ENCODE measurements at regions of chr2 and their contacts with region 1.

Region 1: DNA sequence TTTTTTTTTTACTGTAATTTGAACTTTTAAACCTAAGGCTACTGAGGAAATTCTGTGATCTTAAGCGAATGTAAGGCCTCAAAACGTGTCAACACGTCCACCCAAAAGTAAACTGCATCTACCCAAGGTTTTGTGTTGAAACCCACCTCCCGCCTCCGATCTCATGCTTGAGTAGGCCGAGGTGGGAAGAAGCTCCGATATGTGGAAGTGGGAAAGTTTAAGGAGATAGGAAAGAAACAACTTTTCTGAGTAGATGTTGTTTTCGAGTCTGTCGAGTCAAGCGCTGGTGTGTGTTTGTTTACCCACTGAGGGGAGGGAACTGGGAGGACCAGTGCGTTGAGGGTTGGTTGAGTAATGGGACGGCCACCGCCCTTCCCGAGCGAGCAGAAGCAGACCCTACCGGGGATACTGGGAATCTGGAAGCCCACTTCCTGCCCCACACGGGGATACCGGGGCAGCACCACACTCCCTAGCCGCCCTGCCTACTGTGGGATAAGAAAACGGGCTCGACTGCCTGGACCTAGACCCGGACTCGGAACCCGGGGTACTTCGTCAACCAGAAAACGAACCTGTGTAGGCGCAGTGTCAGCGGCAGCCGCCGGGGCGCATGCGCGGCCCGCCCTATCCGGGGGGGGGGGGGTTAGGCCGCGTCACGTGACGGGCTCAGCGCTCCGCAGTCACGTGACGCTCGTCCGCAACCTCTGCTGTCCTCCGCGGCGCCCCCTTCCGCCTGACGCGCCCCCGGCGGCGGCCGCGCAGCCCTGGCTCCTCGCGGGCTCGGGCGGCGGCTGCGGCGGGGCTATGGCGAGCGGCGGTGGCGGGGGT is at the start of gene RETREG2:
- DNase-seq: peak; percentile 94
- H3K4me3 ChIP-seq: peak within 1 kb of the TSS; percentile 64 to 97 (median 86)
- H3K27ac ChIP-seq: peak within 1 kb of the TSS; percentile 91 to 99 (median 94)
- H3K4me1 ChIP-seq: peaks cover 2 to 39% (median 31%) of the 10 kb centered on the region in 4 donors
- H3K27me3 ChIP-seq: no peaks in the 10 kb centered on the region
- CTCF ChIP-seq: peak in 1 of 4 experiments; percentile 25
- EP300 ChIP-seq: peak in 1 of 4 donors; percentile 28
- POLR2A ChIP-seq: peak; percentile 98 to 99
- total RNA-seq, gene RETREG2: 37.3 to 48.2 (median 43.2) TPM

Region 2: DNA sequence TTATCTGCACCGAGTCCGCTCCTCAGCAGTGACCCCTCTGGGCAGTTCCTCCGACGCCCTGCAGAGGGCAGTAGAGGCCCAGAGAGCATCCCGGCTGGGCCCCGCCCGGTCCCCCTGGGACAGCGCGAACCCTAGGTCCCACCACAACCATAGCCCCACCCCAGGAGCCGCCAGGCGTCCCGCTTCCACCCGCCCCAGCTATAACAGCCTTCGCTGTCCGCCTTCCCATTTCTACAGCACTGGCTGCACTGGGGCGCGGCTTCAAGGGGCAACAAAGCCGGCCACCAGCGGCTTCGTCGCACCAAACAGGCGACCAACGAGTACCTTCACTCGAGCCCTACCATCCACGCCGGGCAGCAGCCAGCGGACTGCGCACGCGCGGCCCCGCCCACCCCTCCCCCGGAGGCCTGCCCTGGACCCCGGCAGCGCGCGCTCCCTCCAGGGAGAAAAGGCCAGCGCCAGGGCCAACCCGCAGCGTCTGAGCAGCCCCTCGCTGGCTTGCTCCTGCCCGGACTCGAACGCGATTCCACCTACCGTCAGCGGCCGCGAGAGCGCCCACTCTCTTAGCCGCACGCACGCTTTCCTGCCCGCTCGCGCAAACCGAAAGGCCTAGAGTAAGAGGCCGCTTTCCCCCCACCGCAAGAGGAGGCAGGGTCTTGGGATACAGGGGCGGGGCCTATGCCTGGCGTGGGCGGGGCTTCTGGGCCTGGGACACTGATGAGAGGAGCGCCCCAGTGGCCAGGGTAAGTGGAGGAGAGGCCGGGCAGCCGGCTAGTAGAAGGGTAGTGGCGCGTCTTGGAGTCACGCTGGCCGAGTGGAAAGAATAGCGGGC is 17.4 kb before region 1 on chr2 and contains the start of gene NHEJ1:
- intact Hi-C with region 1: loop called (anchors 2 kb)
- DNase-seq: peak; percentile 99
- H3K4me3 ChIP-seq: peak within 1 kb of the TSS; percentile 70 to 75 (median 72)
- H3K27ac ChIP-seq: peak within 1 kb of the TSS; percentile 93 to 99 (median 96)
- H3K4me1 ChIP-seq: peaks cover 0 to 13% (median 10%) of the 10 kb centered on the region in 4 donors
- H3K27me3 ChIP-seq: no peaks in the 10 kb centered on the region
- CTCF ChIP-seq: peak; percentile 93 to 100 (median 98)
- EP300 ChIP-seq: no peak
- POLR2A ChIP-seq: peak; percentile 42 to 53
- total RNA-seq, gene NHEJ1: 15.1 to 22.5 (median 18.4) TPM

Region 3: DNA sequence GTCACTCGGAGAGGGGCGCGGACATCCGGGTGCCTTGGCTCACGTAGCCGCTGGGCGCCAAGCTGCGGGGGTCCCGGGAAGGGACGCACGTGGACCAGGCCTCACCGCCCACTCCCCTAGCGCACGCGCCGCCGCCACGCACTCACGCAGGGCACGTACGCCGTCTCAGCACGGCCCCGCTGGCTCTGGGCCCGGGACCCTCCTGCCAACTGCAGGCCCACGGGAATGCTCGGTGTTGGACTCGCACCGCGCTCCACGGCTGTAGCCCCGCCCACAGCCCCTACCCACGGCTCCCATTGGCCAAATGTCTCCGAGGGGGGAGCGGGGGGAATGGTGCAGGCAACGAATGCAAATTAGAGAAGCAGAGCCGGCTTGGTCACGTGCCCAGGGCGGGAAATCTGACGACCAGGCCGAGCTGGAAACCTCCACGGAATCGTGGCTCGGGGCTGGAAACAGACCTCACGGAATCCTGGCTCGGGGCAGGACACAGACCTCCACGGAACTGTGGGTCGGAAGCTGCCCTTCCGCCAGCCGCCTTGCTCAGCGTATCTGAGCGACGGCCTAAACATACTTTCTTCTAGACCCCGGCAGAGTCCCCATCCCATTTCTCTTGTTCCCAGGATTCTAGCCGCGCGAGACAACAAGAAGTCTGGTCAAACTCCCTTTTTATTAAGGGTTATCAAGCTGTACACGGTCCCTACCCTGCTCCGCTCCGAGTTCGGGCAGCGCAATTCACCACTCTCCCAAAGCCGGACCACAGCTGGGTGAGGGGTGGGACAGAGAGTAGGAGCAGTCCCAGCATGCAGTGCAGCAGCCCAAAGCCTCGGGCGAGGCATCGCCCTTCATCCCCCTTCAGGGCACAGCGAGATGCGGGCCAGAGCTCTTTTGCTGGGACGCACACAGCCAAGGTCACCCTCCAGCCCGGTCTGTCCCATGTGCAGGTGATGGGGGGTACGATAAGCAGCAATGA is 41.3 kb after region 1 on chr2 and contains the start of gene ABCB6:
- intact Hi-C with region 1: loop called (anchors 2 kb)
- DNase-seq: peak; percentile 99
- H3K4me3 ChIP-seq: peak within 1 kb of the TSS; percentile 41 to 62 (median 54)
- H3K27ac ChIP-seq: peak within 1 kb of the TSS; percentile 84 to 98 (median 96)
- H3K4me1 ChIP-seq: peaks cover 0 to 37% (median 32%) of the 10 kb centered on the region in 4 donors
- H3K27me3 ChIP-seq: no peaks in the 10 kb centered on the region
- CTCF ChIP-seq: no peak
- EP300 ChIP-seq: no peak
- POLR2A ChIP-seq: peak in 1 of 2 donors; percentile 47
- total RNA-seq, gene ABCB6: 11.8 to 23.0 (median 16.1) TPM

Region 4: GRCh38 chr2:219253753-219254590 is 76.2 kb after region 1 on chr2 and contains the start of gene TUBA4A:
- intact Hi-C with region 1: loop called (anchors 2 kb)
- DNase-seq: peak; percentile 94
- H3K4me3 ChIP-seq: peak within 1 kb of the TSS; percentile 56 to 74 (median 60)
- H3K27ac ChIP-seq: peak within 1 kb of the TSS; percentile 79 to 87 (median 84)
- H3K4me1 ChIP-seq: peaks cover 0 to 52% (median 45%) of the 10 kb centered on the region in 4 donors
- H3K27me3 ChIP-seq: no peaks in the 10 kb centered on the region
- CTCF ChIP-seq: peak in 1 of 4 experiments; percentile 28
- EP300 ChIP-seq: no peak
- POLR2A ChIP-seq: peak; percentile 87 to 96
- total RNA-seq, gene TUBA4A: 47.1 to 109 (median 55.0) TPM

Region 5: GRCh38 chr2:219294356-219295351 is 116.9 kb after region 1 on chr2:
- intact Hi-C with region 1: loop called (anchors 5 kb)
- DNase-seq: peak; percentile 91
- H3K4me3 ChIP-seq: peak overlapping the region; percentile 43 to 65 (median 54)
- H3K27ac ChIP-seq: peak overlapping the region; percentile 84 to 91 (median 90)
- H3K4me1 ChIP-seq: peaks cover 0 to 19% (median 18%) of the 10 kb centered on the region in 4 donors
- H3K27me3 ChIP-seq: peaks cover 0 to 2% (median 2%) of the 10 kb centered on the region in 3 donors
- CTCF ChIP-seq: peak; percentile 85 to 99 (median 91)
- EP300 ChIP-seq: no peak
- POLR2A ChIP-seq: no peak

Measured in sigmoid colon (tissue), 7 donors.